ENCODE measurements at regions of chr3 and their contacts with region 1.

Region 1: GRCh38 chr3:17683542-17684207 is 58.8 kb downstream of the TBC1D5 start:
- DNase-seq: no peak
- ATAC-seq: no peak
- H3K4me3 ChIP-seq: no peak overlapping the region
- H3K27ac ChIP-seq: no peak overlapping the region
- H3K4me1 ChIP-seq: no peaks in the 10 kb centered on the region
- H3K27me3 ChIP-seq: no peaks in the 10 kb centered on the region
- CTCF ChIP-seq: no peak

Region 2: DNA sequence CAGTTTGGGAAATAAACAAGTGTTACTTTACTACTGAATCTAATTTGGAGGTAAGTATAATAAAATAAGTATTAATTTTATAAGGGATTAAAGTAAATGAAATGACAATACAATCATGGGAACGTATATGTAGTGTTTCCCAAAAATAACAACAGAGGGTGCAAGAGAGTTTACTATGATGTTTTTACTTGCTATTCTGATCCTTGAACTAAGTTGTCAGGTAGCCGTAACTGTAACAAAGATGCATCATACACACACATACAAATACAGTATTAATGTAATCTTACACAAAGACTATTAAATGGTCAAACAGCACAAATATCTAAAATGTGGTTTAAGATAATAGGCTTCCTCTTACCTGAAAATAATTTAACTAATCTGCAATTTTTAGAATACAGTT is 252.7 kb before region 1 on chr3:
- CTCF ChIA-PET with region 1: no interaction called
- POLR2A ChIA-PET with region 1: no interaction called
- in situ Hi-C with region 1: no loop called
- intact Hi-C with region 1: loop called (anchors 2 kb)
- DNase-seq: peak; percentile 7
- ATAC-seq: no peak
- H3K4me3 ChIP-seq: no peak overlapping the region
- H3K27ac ChIP-seq: no peak overlapping the region
- H3K4me1 ChIP-seq: no peaks in the 10 kb centered on the region
- H3K27me3 ChIP-seq: no peaks in the 10 kb centered on the region
- CTCF ChIP-seq: peak; percentile 18; the same call in 1 of the 2 replicates

Measured in Panc1 (cell line).